Activated CD4-positive, alpha-beta memory T cell treated with anti-CD3 and anti-CD28 coated beads, Interleukin-2, amount 10 ng/mL, durations not matched to agents 7 days and 5 days (primary cell): ENCODE measurements at regions of chr11 and their contacts with region 1.

Region 1: DNA sequence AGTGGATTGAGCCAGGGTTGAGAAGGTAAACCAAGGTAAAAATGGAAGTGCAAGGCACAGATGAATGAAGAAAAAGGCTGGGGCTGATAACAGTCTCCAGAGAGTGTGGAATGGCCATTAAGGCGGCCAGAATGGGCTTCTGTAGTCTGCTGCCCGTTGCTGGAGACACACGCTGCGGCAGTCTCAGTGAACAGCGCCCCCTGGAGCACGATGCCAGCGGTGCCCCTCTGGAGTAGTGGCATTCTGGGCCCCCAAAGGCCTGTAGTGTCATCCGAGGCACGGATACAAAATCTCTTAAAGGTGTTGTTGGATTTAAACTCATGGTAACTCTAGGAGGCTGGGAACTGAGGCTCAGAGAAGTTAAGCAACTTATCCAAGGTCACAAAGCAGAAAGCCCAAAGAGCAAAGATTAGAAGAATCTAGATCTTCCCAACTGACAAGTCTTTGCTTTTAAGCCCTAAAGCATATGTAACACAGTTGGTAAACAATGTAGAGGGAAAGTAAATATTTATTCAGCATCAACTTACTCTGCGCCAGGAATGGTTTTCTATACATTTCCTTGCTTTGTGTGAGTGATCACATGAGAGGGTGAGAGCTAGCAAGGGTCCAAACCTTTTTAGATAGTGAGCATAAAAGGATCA is 18.2 kb downstream of the KCNJ1 start:
- DNase-seq: peak; percentile 69
- H3K4me3 Mint-ChIP-seq: no peak overlapping the region
- H3K27ac Mint-ChIP-seq: no peak overlapping the region
- H3K4me1 Mint-ChIP-seq: peaks cover 28% of the 10 kb centered on the region
- H3K27me3 Mint-ChIP-seq: no peaks in the 10 kb centered on the region

Region 2: GRCh38 chr11:128859563-128860441 is 10.9 kb after region 1 on chr11:
- CTCF ChIA-PET with region 1: interaction called, 10 read pairs
- POLR2A ChIA-PET with region 1: no interaction called
- DNase-seq: peak; percentile 82
- H3K4me3 Mint-ChIP-seq: no peak overlapping the region
- H3K27ac Mint-ChIP-seq: no peak overlapping the region
- H3K4me1 Mint-ChIP-seq: peaks cover 8% of the 10 kb centered on the region
- H3K27me3 Mint-ChIP-seq: peaks cover 7% of the 10 kb centered on the region

Region 3: GRCh38 chr11:128890543-128891368 is 41.8 kb after region 1 on chr11 and contains the start of gene KCNJ5:
- CTCF ChIA-PET with region 1: no interaction called
- POLR2A ChIA-PET with region 1: no interaction called
- DNase-seq: no peak
- H3K4me3 Mint-ChIP-seq: peak within 1 kb of the TSS; percentile 36
- H3K27ac Mint-ChIP-seq: no peak within 1 kb of the TSS
- H3K4me1 Mint-ChIP-seq: peaks cover 17% of the 10 kb centered on the region
- H3K27me3 Mint-ChIP-seq: peaks cover 66% of the 10 kb centered on the region
- total RNA-seq, gene KCNJ5: not detected